WTC11 (cell line): ENCODE measurements at regions of chr7 and their contacts with region 1.

Region 1: DNA sequence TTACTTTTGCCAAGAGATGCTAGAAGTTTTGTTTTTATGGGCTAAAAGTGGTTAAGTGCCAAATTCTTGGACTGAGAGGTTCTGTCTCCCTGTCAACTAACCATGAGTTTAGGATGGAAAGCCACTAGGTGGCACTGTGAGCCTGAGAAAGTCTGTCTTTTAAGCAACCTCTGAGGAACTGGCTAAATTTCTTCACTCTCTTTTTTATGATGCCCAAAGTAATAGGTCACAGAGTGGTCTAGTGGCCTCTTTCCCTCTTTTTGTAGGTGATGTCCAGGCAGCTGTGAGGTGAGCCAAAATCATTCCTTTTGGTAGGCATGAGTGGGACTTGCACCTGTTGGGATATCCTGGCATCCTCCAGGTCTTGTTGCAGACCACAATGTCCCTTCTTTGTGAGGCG is 56.8 kb downstream of the SND1 start:
- DNase-seq: peak; percentile 76
- ATAC-seq: peak; percentile 84
- H3K4me3 Mint-ChIP-seq: no peak overlapping the region
- H3K27ac Mint-ChIP-seq: no peak overlapping the region
- H3K4me1 Mint-ChIP-seq: peaks cover 2% of the 10 kb centered on the region; the same call in 1 of the 2 replicates
- H3K27me3 Mint-ChIP-seq: no peaks in the 10 kb centered on the region; the same call in 1 of the 2 replicates
- CTCF ChIP-seq: peak; percentile 65

Region 2: DNA sequence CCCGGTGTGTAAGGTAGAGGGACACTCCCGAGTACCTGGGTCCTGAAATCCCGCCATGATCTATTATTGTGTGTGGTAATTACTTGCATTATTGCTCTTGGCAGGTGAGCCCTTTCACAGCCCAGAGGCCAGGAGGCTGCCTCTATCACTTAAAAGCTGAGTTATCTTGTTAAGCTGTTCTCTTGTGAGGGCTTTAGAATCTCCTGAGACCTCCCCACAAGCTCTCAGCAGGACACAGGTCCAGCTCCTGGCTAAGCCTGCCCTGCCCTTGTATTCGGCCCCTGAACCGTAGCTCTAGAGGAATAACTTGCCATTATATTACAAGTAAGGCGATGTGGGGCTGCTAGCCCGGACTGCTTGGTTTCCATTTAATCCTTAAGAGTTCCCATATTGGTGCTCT is 42.9 kb before region 1 on chr7:
- CTCF ChIA-PET with region 1: interaction called, 10 read pairs
- POLR2A ChIA-PET with region 1: no interaction called
- DNase-seq: peak; percentile 32
- ATAC-seq: peak; percentile 96
- H3K4me3 Mint-ChIP-seq: peak overlapping the region; percentile 35
- H3K27ac Mint-ChIP-seq: peak overlapping the region; percentile 86
- H3K4me1 Mint-ChIP-seq: peaks cover 58% of the 10 kb centered on the region
- H3K27me3 Mint-ChIP-seq: no peaks in the 10 kb centered on the region
- CTCF ChIP-seq: no peak